ENCODE measurements at regions of chr17 and their contacts with region 1.

Region 1: GRCh38 chr17:76384222-76384986 is at the start of gene SPHK1:
- DNase-seq: peak; percentile 81
- ATAC-seq: peak; percentile 79
- H3K4me3 ChIP-seq: peak within 1 kb of the TSS; percentile 80
- H3K27ac ChIP-seq: peak within 1 kb of the TSS; percentile 95
- H3K4me1 ChIP-seq: peaks cover 13% of the 10 kb centered on the region
- H3K27me3 ChIP-seq: no peaks in the 10 kb centered on the region
- CTCF ChIP-seq: no peak
- POLR2A ChIP-seq: peak; percentile 86
- RAD21 ChIP-seq: no peak; the same call in 1 of the 2 replicates
- total RNA-seq, gene SPHK1: 44.4 and 45.8 TPM in 2 replicates

Region 2: DNA sequence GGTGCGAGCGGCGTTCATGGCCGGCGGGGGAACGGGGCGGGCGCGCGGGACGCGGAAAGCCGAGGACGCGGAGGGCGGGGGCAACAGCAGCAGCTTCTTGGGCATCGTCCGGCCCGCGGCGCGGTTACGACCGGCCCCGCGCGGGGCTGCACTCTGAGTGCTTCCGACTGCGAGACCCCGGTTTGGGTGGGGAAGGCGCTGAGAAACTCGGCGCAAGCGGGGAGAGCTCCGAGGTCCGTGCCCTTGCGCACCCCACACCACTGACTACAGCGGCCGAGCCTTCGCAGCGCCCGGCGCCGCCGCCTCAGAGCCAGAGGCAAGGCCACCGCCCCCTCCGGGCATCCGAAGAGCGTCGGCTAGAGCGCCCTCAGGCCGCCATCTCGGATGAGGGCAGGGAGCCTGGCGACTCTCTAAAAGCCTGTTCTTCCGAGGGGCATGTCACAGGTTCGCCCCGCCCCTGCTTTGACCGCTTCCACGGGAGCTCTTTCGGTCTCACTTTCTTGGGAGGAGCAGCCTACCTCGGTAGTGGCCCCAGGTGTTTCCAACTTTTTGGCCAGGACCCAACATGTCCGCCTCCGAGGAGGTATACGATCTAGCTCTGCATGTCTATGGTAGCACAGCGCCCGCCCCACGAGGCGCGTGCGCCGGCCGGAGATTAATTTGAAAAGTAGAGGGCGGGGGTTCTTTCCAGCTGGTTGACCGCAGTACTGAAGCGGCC is 30.6 kb before region 1 on chr17 and contains the start of gene PRPSAP1:
- CTCF ChIA-PET with region 1: interaction called, 3 read pairs
- POLR2A ChIA-PET with region 1: no interaction called
- dilution Hi-C with region 1: no loop called
- in situ Hi-C with region 1: no loop called
- intact Hi-C with region 1: loop called (anchors 1 kb)
- DNase-seq: peak; percentile 87
- ATAC-seq: peak; percentile 99
- H3K4me3 ChIP-seq: peak within 1 kb of the TSS; percentile 85
- H3K27ac ChIP-seq: peak within 1 kb of the TSS; percentile 93
- H3K4me1 ChIP-seq: peaks cover 4% of the 10 kb centered on the region; the same call in 1 of the 2 replicates
- H3K27me3 ChIP-seq: no peaks in the 10 kb centered on the region
- CTCF ChIP-seq: peak; percentile 28; the same call in 1 of the 2 replicates
- POLR2A ChIP-seq: peak; percentile 93
- RAD21 ChIP-seq: peak; percentile 21; the same call in 1 of the 2 replicates
- total RNA-seq, gene PRPSAP1: 29.2 and 34.4 TPM in 2 replicates

Region 3: GRCh38 chr17:76370261-76370993 is 14.0 kb before region 1 on chr17:
- CTCF ChIA-PET with region 1: interaction called, 12 read pairs
- POLR2A ChIA-PET with region 1: no interaction called
- dilution Hi-C with region 1: no loop called
- in situ Hi-C with region 1: no loop called
- intact Hi-C with region 1: loop called (anchors 2 kb)
- DNase-seq: peak; percentile 98
- ATAC-seq: peak; percentile 72
- H3K4me3 ChIP-seq: no peak overlapping the region
- H3K27ac ChIP-seq: peak overlapping the region; percentile 72; the same call in 1 of the 2 replicates
- H3K4me1 ChIP-seq: peaks cover 25% of the 10 kb centered on the region
- H3K27me3 ChIP-seq: no peaks in the 10 kb centered on the region
- CTCF ChIP-seq: peak; percentile 60
- POLR2A ChIP-seq: no peak; the same call in none of the 2 replicates
- RAD21 ChIP-seq: peak; percentile 53

Measured in IMR-90 (cell line).